PC-3 (cell line): ENCODE measurements at regions of chr7 and their contacts with region 1.

Region 1: DNA sequence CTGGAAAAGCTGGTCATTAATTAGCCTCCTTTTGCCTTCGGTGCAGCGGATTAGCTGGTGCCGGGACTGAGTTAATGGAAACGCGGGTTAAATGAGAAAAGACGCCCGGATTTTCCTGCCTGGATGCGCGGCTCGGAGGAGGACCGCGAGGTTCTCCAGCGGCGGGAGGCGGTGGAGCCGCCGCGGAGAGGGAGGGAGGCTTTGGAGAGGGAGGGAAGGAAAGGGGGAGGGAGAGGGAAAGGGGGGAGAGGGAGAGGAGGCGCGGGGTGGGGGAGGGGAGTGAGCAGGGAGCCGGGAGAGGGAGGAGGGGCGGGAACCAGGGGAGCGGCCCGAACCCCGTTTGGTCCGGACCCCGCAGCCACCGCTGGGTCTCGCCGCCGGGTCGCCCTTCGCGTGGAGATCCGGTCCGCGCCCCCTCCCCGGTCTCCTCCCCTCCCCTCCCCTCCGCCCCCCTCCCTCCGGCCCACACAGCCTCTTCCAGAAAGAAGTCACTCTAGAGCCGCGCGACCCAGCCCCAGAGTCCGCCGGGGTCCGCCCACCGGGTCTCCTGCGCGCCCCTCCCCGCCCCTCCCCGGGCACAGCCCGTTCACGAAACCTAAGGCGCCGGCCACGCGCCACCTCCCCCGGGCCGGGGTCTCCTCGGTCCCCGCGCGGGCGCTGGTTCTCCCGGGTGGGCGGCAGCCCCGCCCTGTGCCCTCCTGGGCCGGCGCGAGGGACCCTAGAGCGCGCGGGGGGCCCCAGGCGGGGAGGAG is 347.5 kb downstream of the DNAJB6 start:
- DNase-seq: no peak
- ATAC-seq: no peak
- H3K4me3 ChIP-seq: no peak overlapping the region
- H3K27ac ChIP-seq: no peak overlapping the region
- H3K4me1 ChIP-seq: peaks cover 5% of the 10 kb centered on the region; the same call in 1 of the 2 replicates
- H3K27me3 ChIP-seq: no peaks in the 10 kb centered on the region
- CTCF ChIP-seq: no peak

Region 2: DNA sequence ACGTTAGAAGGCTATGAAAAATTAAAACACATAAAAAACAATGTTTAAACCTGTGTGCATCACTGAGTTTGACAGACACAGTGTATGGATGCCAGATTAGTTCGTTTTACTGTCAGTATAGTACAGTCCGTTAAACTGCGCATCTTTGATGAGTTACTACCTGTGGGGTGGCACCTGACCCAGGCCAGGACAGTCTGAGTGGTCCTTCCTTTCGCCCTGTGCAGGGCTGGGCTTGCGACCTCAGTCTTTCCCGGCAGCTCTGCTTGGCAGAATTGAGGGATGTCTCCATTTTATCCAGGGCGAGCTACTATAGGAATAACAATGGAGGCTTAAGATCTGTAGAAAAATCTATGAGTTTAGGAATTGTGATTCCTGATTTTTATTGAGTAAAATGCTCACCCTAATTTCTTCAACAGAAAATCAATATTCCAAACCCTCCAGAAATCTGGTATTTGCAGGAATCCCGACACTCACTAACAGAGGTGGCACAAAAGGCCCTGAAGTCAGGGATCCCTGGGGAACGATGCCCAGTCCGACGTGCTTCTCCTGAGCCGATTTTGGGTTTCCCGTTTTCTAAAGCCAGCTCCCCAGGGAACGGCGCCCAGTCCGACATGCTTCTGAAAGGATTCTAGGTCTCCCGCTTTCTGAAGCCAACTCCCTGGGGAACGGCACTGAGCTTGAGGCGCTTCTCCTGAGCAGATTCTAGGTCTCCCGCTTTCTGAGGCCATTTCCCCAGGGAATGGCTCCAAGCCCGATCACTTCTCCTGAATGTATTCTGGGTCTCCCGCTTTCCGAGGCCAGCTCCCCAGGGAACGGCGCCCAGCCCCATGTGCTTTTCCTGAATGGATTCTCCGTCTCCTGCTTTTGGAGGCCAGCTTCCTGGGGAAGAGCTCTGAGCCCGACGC is 30.1 kb after region 1 on chr7:
- CTCF ChIA-PET with region 1: no interaction called
- POLR2A ChIA-PET with region 1: no interaction called
- intact Hi-C with region 1: loop called (anchors 1 kb)
- DNase-seq: no peak
- ATAC-seq: no peak
- H3K4me3 ChIP-seq: no peak overlapping the region
- H3K27ac ChIP-seq: no peak overlapping the region
- H3K4me1 ChIP-seq: no peaks in the 10 kb centered on the region
- H3K27me3 ChIP-seq: peaks cover 25% of the 10 kb centered on the region
- CTCF ChIP-seq: no peak